B cell (primary cell): ENCODE measurements at regions of chr3 and their contacts with region 1.

Region 1: GRCh38 chr3:30319713-30320112 is 286.7 kb upstream of the TGFBR2 start:
- DNase-seq: peak; percentile 68
- ATAC-seq: peak; percentile 92
- H3K4me3 ChIP-seq: no peak overlapping the region
- H3K4me3 Mint-ChIP-seq: no peak overlapping the region
- H3K27ac ChIP-seq: no peak overlapping the region
- H3K27ac Mint-ChIP-seq: no peak overlapping the region
- H3K4me1 ChIP-seq: peaks cover 5% of the 10 kb centered on the region in 2 donors
- H3K4me1 Mint-ChIP-seq: peaks cover 4% of the 10 kb centered on the region
- H3K27me3 ChIP-seq: no peaks in the 10 kb centered on the region
- H3K27me3 Mint-ChIP-seq: no peaks in the 10 kb centered on the region
- CTCF ChIP-seq: peak; percentile 77

Region 2: DNA sequence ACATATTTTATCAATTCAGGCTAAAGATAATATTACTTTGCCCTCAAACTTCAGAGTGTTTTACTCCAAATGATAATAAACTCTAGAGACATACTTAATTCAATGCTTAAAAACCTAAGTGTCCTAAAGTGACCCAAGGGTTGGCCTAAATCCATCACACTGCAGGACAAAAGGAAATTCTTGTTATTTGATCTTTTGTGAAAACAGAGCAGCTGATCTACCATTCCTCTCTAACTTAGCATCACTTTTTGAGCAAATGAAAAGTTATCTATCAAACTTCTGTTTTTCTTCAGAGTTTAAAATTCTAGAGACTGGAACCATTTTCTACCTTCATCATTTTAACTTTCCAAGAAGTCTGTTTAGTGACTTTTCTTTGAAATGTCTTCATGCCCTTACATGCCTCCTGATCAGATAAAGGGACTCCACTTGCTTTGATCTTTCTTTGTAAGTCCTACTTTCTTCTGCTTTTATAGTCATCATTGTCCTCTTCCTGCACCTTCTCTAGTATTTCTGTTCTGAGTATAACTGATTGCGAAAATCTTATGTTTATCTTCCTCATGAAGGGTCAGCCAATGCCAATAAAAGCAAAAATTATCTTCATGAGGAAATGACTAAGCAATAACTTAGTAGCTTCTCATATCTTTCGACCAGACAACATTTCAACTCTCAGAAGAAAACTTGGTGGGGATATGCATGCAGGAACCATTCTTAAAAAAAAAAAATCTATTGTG is 92.0 kb before region 1 on chr3:
- CTCF ChIA-PET with region 1: no interaction called
- POLR2A ChIA-PET with region 1: no interaction called
- intact Hi-C with region 1: no loop called
- DNase-seq: no peak
- ATAC-seq: no peak
- H3K4me3 ChIP-seq: no peak overlapping the region
- H3K4me3 Mint-ChIP-seq: no peak overlapping the region
- H3K27ac ChIP-seq: no peak overlapping the region
- H3K27ac Mint-ChIP-seq: no peak overlapping the region
- H3K4me1 ChIP-seq: no peaks in the 10 kb centered on the region
- H3K4me1 Mint-ChIP-seq: peaks cover 5% of the 10 kb centered on the region
- H3K27me3 ChIP-seq: no peaks in the 10 kb centered on the region
- H3K27me3 Mint-ChIP-seq: peaks cover 4% of the 10 kb centered on the region
- CTCF ChIP-seq: no peak

Region 3: GRCh38 chr3:30269751-30270445 is 49.8 kb before region 1 on chr3:
- CTCF ChIA-PET with region 1: interaction called, 3 read pairs
- POLR2A ChIA-PET with region 1: no interaction called
- intact Hi-C with region 1: loop called (anchors 5 kb)
- DNase-seq: peak; percentile 77
- ATAC-seq: peak; percentile 96
- H3K4me3 ChIP-seq: peak overlapping the region in 1 of 5 experiments; percentile 30
- H3K4me3 Mint-ChIP-seq: peak overlapping the region; percentile 57
- H3K27ac ChIP-seq: peak overlapping the region; percentile 8 to 25
- H3K27ac Mint-ChIP-seq: peak overlapping the region; percentile 0
- H3K4me1 ChIP-seq: peaks cover 10 to 12% of the 10 kb centered on the region in 2 donors
- H3K4me1 Mint-ChIP-seq: peaks cover 10% of the 10 kb centered on the region
- H3K27me3 ChIP-seq: no peaks in the 10 kb centered on the region
- H3K27me3 Mint-ChIP-seq: no peaks in the 10 kb centered on the region
- CTCF ChIP-seq: no peak

Region 4: GRCh38 chr3:30353711-30354467 is 34.2 kb after region 1 on chr3:
- CTCF ChIA-PET with region 1: interaction called, 13 read pairs
- POLR2A ChIA-PET with region 1: no interaction called
- intact Hi-C with region 1: no loop called
- DNase-seq: peak; percentile 56
- ATAC-seq: peak; percentile 78
- H3K4me3 ChIP-seq: no peak overlapping the region
- H3K4me3 Mint-ChIP-seq: peak overlapping the region; percentile 30
- H3K27ac ChIP-seq: no peak overlapping the region
- H3K27ac Mint-ChIP-seq: peak overlapping the region; percentile 33
- H3K4me1 ChIP-seq: peaks cover 31 to 36% of the 10 kb centered on the region in 2 donors
- H3K4me1 Mint-ChIP-seq: peaks cover 34% of the 10 kb centered on the region
- H3K27me3 ChIP-seq: peaks cover 0 to 26% (median 12%) of the 10 kb centered on the region in 4 experiments
- H3K27me3 Mint-ChIP-seq: peaks cover 41% of the 10 kb centered on the region
- CTCF ChIP-seq: no peak